Activated B cell treated with CpG ODN at 0.5 μM for 24 hours (primary cell): ENCODE measurements at regions of chr2 and their contacts with region 1.

Region 1: DNA sequence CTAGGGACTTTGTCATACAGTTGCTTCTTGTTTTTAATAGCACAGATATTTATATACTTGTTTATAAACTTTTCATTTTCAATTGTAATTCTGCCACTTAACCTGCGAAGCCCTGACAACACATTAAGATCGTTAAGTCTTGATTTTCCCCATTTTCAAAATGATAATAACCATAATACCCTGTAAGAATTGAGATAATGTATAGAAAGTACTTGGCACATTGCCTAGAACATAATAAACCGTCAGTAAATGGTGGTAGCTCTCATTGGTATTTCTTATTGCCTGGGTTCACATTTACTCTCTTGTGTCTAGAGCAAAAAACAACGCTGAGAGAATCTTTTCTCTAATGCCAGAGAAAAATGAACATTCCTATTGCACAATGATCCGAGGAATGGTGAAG is 18.6 kb downstream of the PTCD3 start:
- DNase-seq: no peak
- ATAC-seq: no peak
- H3K4me3 Mint-ChIP-seq: no peak overlapping the region
- H3K27ac Mint-ChIP-seq: no peak overlapping the region
- H3K4me1 Mint-ChIP-seq: peaks cover 8% of the 10 kb centered on the region
- H3K27me3 Mint-ChIP-seq: no peaks in the 10 kb centered on the region
- CTCF ChIP-seq: no peak

Region 2: GRCh38 chr2:85628658-85629057 is 496.0 kb before region 1 on chr2:
- CTCF ChIA-PET with region 1: no interaction called
- POLR2A ChIA-PET with region 1: interaction called, 10 read pairs
- intact Hi-C with region 1: no loop called
- DNase-seq: no peak
- ATAC-seq: peak; percentile 65
- H3K4me3 Mint-ChIP-seq: no peak overlapping the region
- H3K27ac Mint-ChIP-seq: peak overlapping the region; percentile 41
- H3K4me1 Mint-ChIP-seq: peaks cover 12% of the 10 kb centered on the region
- H3K27me3 Mint-ChIP-seq: no peaks in the 10 kb centered on the region
- CTCF ChIP-seq: no peak

Region 3: GRCh38 chr2:86140969-86141392 is 16.3 kb after region 1 on chr2:
- CTCF ChIA-PET with region 1: no interaction called
- POLR2A ChIA-PET with region 1: no interaction called
- intact Hi-C with region 1: no loop called
- DNase-seq: no peak
- ATAC-seq: no peak
- H3K4me3 Mint-ChIP-seq: no peak overlapping the region
- H3K27ac Mint-ChIP-seq: no peak overlapping the region
- H3K4me1 Mint-ChIP-seq: no peaks in the 10 kb centered on the region
- H3K27me3 Mint-ChIP-seq: no peaks in the 10 kb centered on the region
- CTCF ChIP-seq: no peak

Region 4: DNA sequence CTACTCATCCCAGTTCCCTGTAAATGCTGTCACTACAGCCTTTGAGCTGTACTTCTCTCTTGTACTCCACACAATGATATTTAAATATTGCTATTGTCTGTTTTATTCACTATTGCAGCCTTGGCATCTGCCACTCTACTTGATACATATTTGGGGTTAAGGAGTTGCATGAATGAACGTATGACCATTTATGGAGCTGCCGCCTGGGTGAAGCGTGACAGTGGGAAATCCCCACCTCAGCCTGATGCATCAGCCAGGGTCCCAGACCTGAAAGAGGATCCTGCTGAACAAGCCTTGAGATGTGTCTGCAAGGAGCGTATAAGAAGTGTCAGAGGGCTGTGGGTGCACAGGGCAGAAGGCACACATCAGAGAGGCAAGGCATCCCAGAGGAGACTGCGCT is 113.7 kb after region 1 on chr2:
- CTCF ChIA-PET with region 1: no interaction called
- POLR2A ChIA-PET with region 1: no interaction called
- intact Hi-C with region 1: no loop called
- DNase-seq: peak; percentile 55
- ATAC-seq: peak; percentile 99
- H3K4me3 Mint-ChIP-seq: peak overlapping the region; percentile 39
- H3K27ac Mint-ChIP-seq: peak overlapping the region; percentile 5
- H3K4me1 Mint-ChIP-seq: peaks cover 57% of the 10 kb centered on the region
- H3K27me3 Mint-ChIP-seq: no peaks in the 10 kb centered on the region
- CTCF ChIP-seq: no peak

Region 5: GRCh38 chr2:86675511-86676015 is 550.9 kb after region 1 on chr2:
- CTCF ChIA-PET with region 1: no interaction called
- POLR2A ChIA-PET with region 1: no interaction called
- intact Hi-C with region 1: no loop called
- DNase-seq: no peak
- ATAC-seq: no peak
- H3K4me3 Mint-ChIP-seq: no peak overlapping the region
- H3K27ac Mint-ChIP-seq: no peak overlapping the region
- H3K4me1 Mint-ChIP-seq: no peaks in the 10 kb centered on the region
- H3K27me3 Mint-ChIP-seq: no peaks in the 10 kb centered on the region
- CTCF ChIP-seq: no peak